Calu3 (cell line): ENCODE measurements at regions of chr2 and their contacts with region 1.

Region 1: GRCh38 chr2:141317986-141318385 is 812.8 kb downstream of the LRP1B start:
- DNase-seq: no peak
- H3K4me3 Mint-ChIP-seq: no peak overlapping the region
- H3K27ac Mint-ChIP-seq: peak overlapping the region; percentile 95
- H3K4me1 Mint-ChIP-seq: peaks cover 27% of the 10 kb centered on the region
- H3K27me3 Mint-ChIP-seq: no peaks in the 10 kb centered on the region
- CTCF ChIP-seq: no peak

Region 2: DNA sequence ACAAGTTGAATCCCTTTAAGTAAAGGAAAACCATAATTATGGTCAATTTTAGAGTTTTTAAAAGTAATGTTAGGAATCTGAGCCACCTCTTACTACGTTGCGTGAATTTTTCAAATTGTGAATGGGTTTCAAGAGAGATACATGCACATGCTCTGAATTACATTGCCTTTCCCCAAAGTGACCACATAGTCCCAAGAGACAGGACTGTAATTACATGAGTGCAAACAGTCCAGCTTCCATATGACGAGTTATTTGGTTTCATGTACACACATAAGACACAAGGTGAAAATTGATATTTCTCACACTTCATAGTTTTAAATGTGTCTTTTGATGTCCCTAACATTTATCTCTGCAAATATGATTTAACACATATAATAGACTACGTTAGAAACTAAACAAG is 37.9 kb before region 1 on chr2:
- CTCF ChIA-PET with region 1: no interaction called
- intact Hi-C with region 1: no loop called
- DNase-seq: no peak
- H3K4me3 Mint-ChIP-seq: no peak overlapping the region
- H3K27ac Mint-ChIP-seq: no peak overlapping the region
- H3K4me1 Mint-ChIP-seq: no peaks in the 10 kb centered on the region
- H3K27me3 Mint-ChIP-seq: no peaks in the 10 kb centered on the region
- CTCF ChIP-seq: no peak

Region 3: DNA sequence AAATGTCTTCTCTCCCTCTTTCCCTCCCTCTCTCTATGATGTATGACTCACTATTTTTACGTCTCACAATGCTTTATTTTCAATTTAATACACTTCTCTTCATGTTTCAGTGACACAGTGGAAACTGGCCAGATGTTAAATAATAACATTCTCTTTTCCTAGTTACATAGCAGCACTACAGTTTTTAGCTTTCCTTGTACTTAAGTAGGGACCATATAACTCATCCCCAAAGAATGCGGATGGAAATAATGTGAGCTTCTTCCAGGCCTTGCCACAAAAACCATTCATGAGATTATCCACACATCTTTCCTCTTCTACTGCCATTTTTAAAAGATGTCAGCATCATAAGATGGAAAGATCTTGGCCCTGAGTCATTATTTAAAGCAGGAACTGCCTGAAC is 23.5 kb after region 1 on chr2:
- CTCF ChIA-PET with region 1: no interaction called
- intact Hi-C with region 1: loop called (anchors 2 kb)
- DNase-seq: no peak
- H3K4me3 Mint-ChIP-seq: no peak overlapping the region
- H3K27ac Mint-ChIP-seq: peak overlapping the region; percentile 16
- H3K4me1 Mint-ChIP-seq: peaks cover 16% of the 10 kb centered on the region
- H3K27me3 Mint-ChIP-seq: no peaks in the 10 kb centered on the region
- CTCF ChIP-seq: no peak

Region 4: DNA sequence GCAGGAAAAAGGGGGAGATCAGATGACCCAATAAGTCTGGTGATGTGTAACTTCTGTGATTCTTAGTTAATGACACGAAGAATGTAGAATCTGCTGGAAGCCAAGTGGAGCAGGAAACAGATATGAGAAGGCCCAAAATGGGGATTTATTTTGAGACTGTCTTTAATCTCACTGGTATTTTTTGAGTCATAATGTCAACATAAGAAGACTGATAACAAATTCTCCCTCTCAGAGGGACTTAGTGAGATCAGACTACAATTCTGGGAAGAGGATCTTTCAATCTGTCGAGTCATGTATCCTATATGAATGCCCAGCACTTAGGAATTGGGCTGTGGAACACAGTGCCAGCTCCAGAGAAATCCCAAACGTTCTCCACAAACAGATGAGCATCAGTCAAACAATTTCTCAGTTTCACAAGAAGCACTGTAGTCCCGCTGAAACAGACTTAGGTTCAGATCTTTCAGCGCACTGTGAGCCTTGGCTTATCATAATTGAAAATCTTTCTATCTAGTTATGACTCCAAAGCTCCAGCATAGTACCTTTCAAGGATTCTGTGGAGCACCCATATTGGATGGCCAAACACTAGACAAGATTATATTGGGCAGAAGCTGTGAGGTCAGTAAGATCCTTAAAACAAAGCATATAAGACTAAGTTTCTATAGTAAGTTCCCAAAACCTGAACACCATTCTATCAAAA is 74.7 kb after region 1 on chr2:
- CTCF ChIA-PET with region 1: interaction called, 3 read pairs
- intact Hi-C with region 1: loop called (anchors 2 kb)
- DNase-seq: no peak
- H3K4me3 Mint-ChIP-seq: peak overlapping the region; percentile 14
- H3K27ac Mint-ChIP-seq: peak overlapping the region; percentile 72
- H3K4me1 Mint-ChIP-seq: peaks cover 36% of the 10 kb centered on the region
- H3K27me3 Mint-ChIP-seq: no peaks in the 10 kb centered on the region
- CTCF ChIP-seq: no peak